ENCODE measurements at regions of chr2 and their contacts with region 1.

Region 1: GRCh38 chr2:240513549-240514287 is 44.1 kb downstream of the ANKMY1 start:
- DNase-seq: peak in 1 of 2 experiments; percentile 94
- H3K4me3 ChIP-seq: no peak overlapping the region
- H3K27ac ChIP-seq: no peak overlapping the region
- H3K4me1 ChIP-seq: no peaks in the 10 kb centered on the region
- H3K27me3 ChIP-seq: peaks cover 0 to 6% (median 2%) of the 10 kb centered on the region in 4 experiments; a peak in 6 of 7 replicates
- CTCF ChIP-seq: peak in 2 of 3 experiments; percentile 92 to 99; a peak in 3 of 4 replicates
- EP300 ChIP-seq: no peak
- POLR2A ChIP-seq: no peak
- RAD21 ChIP-seq: peak; percentile 82 to 88

Region 2: GRCh38 chr2:240183006-240183874 is 330.5 kb before region 1 on chr2:
- CTCF ChIA-PET with region 1: no interaction called
- POLR2A ChIA-PET with region 1: no interaction called
- DNase-seq: no peak
- H3K4me3 ChIP-seq: no peak overlapping the region
- H3K27ac ChIP-seq: no peak overlapping the region
- H3K4me1 ChIP-seq: no peaks in the 10 kb centered on the region; a peak in 1 of 7 replicates
- H3K27me3 ChIP-seq: 0 out of 7 replicates have a peak, but pooled peaks cover 0 to 3% (median 0%) of the 10 kb centered on the region in 4 experiments
- CTCF ChIP-seq: no peak
- EP300 ChIP-seq: no peak
- POLR2A ChIP-seq: no peak
- RAD21 ChIP-seq: no peak

Region 3: DNA sequence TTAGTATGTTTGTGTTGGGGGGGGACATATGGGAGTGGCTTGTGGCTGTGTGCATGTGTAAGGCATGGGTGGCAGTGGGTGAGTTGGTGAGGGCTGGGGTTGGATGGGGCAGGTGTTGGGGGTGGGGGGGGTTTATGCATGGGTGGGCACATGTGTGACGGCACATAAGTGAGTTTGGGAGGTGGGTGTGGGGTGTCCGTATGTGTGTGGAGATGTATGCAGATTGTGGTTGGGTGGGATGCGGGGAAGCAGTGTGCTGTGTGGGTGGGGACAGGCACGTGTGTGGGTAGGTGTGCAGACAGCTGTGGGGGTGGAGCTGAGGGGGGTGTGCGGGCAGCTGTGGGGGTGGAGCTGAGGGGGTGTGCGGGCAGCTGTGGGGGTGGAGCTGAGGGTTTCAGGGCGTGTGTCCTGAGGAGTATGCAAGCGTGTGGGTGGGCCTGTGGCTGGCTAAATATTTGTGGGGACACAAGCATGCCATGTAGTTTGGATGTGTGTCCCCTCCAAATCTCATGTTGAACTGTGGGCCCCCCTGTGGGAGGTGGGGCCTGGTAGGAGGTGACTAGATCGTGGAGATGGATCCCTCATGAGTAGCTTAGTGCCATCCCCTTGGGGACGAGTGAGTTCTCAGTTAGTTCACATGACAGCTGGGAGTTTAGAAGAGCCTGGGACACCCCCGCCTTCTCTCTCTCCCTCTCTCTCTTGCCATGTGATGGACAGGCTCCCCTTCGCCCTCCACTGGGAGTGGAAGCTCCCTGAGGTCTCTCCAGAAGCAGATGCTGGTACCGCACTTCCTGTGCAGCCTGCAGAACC is 15.3 kb before region 1 on chr2:
- CTCF ChIA-PET with region 1: interaction called, 17 read pairs
- POLR2A ChIA-PET with region 1: no interaction called
- DNase-seq: no peak
- H3K4me3 ChIP-seq: no peak overlapping the region
- H3K27ac ChIP-seq: no peak overlapping the region
- H3K4me1 ChIP-seq: no peaks in the 10 kb centered on the region
- H3K27me3 ChIP-seq: 0 out of 7 replicates have a peak, but pooled peaks cover 0 to 3% (median 0%) of the 10 kb centered on the region in 4 experiments
- CTCF ChIP-seq: no peak
- EP300 ChIP-seq: no peak
- POLR2A ChIP-seq: no peak
- RAD21 ChIP-seq: no peak

Region 4: GRCh38 chr2:240524963-240525718 is 11.4 kb after region 1 on chr2:
- CTCF ChIA-PET with region 1: interaction called, 14 read pairs
- POLR2A ChIA-PET with region 1: no interaction called
- DNase-seq: peak in 1 of 2 experiments; percentile 8
- H3K4me3 ChIP-seq: no peak overlapping the region
- H3K27ac ChIP-seq: no peak overlapping the region
- H3K4me1 ChIP-seq: peaks cover 0 to 5% (median 3%) of the 10 kb centered on the region in 4 experiments; a peak in 4 of 7 replicates
- H3K27me3 ChIP-seq: peaks cover 0 to 9% (median 7%) of the 10 kb centered on the region in 4 experiments; a peak in 4 of 7 replicates
- CTCF ChIP-seq: no peak
- EP300 ChIP-seq: no peak
- POLR2A ChIP-seq: no peak
- RAD21 ChIP-seq: no peak

Measured in H1 (cell line).